Activated T-helper 2 cell treated with anti-CD3 and anti-CD28 coated beads, Interferon-gamma antibody, Interleukin-2, Interleukin-4, amounts not matched to agents 10 μg/mL and 5 μg/mL and 100 μg/mL, durations not matched to agents 14 hours and 24 hours and 36 hours (primary cell): ENCODE measurements at regions of chr3 and their contacts with region 1.

Region 1: DNA sequence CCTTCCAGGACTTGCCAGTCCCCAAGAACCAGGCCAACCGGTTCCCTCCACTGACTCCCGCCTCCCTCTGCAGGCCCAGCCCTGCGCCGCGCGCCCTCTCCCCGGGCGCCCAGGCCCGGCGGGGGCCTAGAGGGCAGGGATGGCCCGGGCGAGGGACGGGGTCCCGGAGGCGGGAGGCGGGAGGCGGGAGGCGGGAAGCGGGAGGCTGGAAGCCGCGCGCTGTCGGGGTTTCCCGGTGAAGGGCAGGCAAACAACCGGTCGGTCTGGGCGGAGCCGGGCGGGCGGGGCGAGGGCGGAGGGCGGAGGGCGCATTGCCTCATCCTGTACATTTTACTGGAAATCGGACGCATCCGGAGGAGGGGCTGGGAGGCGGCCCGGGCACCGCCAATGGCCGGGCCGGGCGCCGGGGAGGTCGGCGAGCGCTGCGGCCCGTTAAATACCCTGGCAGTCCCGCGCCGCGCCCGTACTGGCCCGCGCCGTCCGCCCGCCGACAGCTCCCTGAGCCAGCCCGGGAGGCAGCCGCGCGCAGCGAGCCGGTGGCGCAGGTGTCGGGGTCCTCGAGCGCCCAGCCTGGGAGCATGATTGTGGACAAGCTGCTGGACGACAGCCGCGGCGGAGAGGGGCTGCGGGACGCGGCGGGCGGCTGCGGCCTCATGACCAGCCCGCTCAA is at the start of gene NFKBIZ:
- DNase-seq: peak; percentile 90
- H3K4me3 Mint-ChIP-seq: peak within 1 kb of the TSS; percentile 94
- H3K27ac Mint-ChIP-seq: peak within 1 kb of the TSS; percentile 97
- H3K4me1 Mint-ChIP-seq: peaks cover 44% of the 10 kb centered on the region
- H3K27me3 Mint-ChIP-seq: no peaks in the 10 kb centered on the region
- total RNA-seq, gene NFKBIZ: 122 and 140 TPM in 2 replicates

Region 2: DNA sequence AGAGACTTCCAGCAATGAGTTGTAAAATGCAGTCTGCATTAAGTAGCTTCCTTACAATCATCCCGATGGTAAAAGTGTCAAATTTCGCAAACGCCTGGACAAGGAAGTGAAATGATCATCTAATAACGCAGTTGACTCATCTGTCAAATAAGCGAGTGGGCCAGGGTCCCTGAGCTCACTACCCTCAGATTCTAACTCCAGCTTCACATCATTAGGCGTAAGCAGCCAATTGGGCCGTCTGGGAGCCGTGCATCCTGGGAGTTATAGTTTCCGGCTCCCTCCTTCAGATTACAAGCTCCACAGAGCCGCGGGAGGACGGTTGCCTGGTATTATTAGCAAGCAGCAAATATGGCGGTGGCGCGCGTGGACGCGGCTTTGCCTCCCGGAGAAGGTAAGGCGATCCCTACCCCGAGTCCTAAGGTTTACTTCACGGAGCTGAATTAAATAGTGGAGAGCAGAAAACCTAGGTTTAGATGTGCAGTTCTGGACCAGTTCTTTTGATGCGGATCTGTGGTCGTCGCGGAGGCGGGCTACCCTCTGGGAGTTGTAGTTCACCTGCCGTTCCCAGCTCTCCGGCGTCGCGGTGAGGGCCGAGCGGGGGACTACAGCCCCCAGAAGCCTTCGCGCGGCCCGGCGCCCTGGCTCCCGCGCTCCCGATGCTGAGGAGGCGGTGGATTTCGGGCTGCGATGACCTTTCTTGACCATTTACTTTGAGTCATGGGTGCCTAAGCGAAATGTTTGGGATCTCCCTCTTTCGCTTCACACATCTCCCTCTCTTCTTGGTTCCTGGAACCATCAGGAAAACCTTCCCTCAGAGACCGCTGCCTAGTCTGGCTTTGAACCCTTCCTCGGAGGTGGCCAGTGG is 124.6 kb before region 1 on chr3 and contains the start of gene CEP97:
- intact Hi-C with region 1: loop called (anchors 2 kb)
- DNase-seq: peak; percentile 85
- H3K4me3 Mint-ChIP-seq: peak within 1 kb of the TSS; percentile 96
- H3K27ac Mint-ChIP-seq: peak within 1 kb of the TSS; percentile 98
- H3K4me1 Mint-ChIP-seq: peaks cover 40% of the 10 kb centered on the region
- H3K27me3 Mint-ChIP-seq: no peaks in the 10 kb centered on the region
- total RNA-seq, gene CEP97: 26.0 and 26.1 TPM in 2 replicates

Region 3: GRCh38 chr3:101827211-101828174 is 21.7 kb before region 1 on chr3:
- intact Hi-C with region 1: loop called (anchors 1 kb)
- DNase-seq: peak; percentile 77
- H3K4me3 Mint-ChIP-seq: peak overlapping the region; percentile 93
- H3K27ac Mint-ChIP-seq: peak overlapping the region; percentile 98
- H3K4me1 Mint-ChIP-seq: peaks cover 55% of the 10 kb centered on the region
- H3K27me3 Mint-ChIP-seq: no peaks in the 10 kb centered on the region

Region 4: GRCh38 chr3:101861212-101861788 is 12.1 kb after region 1 on chr3:
- intact Hi-C with region 1: loop called (anchors 1 kb)
- DNase-seq: no peak
- H3K4me3 Mint-ChIP-seq: no peak overlapping the region
- H3K27ac Mint-ChIP-seq: peak overlapping the region; percentile 72
- H3K4me1 Mint-ChIP-seq: peaks cover 47% of the 10 kb centered on the region
- H3K27me3 Mint-ChIP-seq: no peaks in the 10 kb centered on the region

Region 5: DNA sequence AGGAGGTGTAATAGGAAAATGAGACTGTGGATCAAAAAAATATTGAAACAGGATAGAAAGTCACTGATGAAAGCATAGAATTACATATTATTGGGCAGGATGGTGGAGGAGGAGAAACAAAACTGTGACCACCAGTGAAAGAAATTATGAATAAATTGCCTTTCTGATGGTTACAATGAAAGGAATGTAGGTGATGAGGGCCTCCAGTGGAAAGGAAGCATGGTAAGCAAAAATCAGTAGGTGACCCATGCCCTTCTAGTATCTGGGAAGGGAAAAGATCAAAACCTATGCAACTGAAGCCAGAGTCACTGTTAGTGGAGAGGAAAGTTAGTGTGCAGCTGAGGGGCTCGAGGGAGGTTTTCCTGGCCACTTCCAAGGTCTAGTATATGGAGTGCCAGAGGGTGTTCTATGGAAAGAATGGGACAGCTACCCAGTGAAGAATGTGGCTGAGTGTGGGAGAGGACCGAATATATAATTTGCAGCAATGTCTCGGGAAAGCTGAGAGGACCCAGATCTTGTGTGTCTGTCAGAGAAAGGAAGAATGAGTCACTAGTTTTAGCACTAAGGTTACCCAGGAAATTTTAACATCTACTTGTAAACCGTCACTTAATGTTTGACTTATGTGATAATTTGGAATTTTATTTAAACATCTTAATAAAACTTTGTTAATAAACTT is 146.3 kb after region 1 on chr3:
- intact Hi-C with region 1: loop called (anchors 1 kb)
- DNase-seq: no peak
- H3K4me3 Mint-ChIP-seq: peak overlapping the region; percentile 24
- H3K27ac Mint-ChIP-seq: peak overlapping the region; percentile 83
- H3K4me1 Mint-ChIP-seq: peaks cover 63% of the 10 kb centered on the region
- H3K27me3 Mint-ChIP-seq: peaks cover 2% of the 10 kb centered on the region

Region 6: GRCh38 chr3:102113411-102114041 is 264.3 kb after region 1 on chr3:
- intact Hi-C with region 1: loop called (anchors 5 kb)
- DNase-seq: no peak
- H3K4me3 Mint-ChIP-seq: no peak overlapping the region
- H3K27ac Mint-ChIP-seq: peak overlapping the region; percentile 79
- H3K4me1 Mint-ChIP-seq: peaks cover 36% of the 10 kb centered on the region
- H3K27me3 Mint-ChIP-seq: no peaks in the 10 kb centered on the region

Region 7: GRCh38 chr3:102206511-102207031 is 357.4 kb after region 1 on chr3:
- intact Hi-C with region 1: no loop called
- DNase-seq: no peak
- H3K4me3 Mint-ChIP-seq: no peak overlapping the region
- H3K27ac Mint-ChIP-seq: no peak overlapping the region
- H3K4me1 Mint-ChIP-seq: peaks cover 2% of the 10 kb centered on the region
- H3K27me3 Mint-ChIP-seq: peaks cover 15% of the 10 kb centered on the region